Right lobe of liver (tissue), 6 donors: ENCODE measurements at regions of chr2 and their contacts with region 1.

Region 1: DNA sequence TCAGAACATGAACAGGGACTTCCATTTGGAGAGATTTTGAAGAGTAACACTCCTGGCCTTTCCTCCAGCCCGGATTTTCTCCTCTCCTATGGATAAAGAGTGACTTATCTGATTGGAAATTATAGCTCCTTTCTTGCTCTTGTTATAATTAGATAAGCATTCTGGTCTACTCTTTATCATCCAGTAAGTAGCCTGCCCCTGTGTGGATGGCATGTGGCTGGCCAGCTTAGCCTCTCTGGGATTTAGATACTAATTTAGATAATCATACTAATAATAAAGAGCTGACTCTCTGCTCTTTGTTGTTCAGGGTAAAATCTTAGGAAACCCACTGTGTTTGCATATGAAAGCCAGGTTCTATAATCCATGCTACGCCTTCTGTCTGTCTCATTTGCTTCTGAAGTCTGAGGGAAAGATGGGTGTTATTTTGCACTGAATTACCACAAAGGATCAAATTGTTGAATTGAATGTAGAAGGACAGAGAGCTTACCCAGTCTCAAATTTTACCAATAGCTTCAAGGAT is 438.8 kb downstream of the SPAG16 start:
- DNase-seq: no peak
- ATAC-seq: no peak
- H3K4me3 ChIP-seq: no peak overlapping the region
- H3K27ac ChIP-seq: no peak overlapping the region
- H3K4me1 ChIP-seq: no peaks in the 10 kb centered on the region
- H3K27me3 ChIP-seq: no peaks in the 10 kb centered on the region
- CTCF ChIP-seq: no peak
- POLR2A ChIP-seq: no peak

Region 2: GRCh38 chr2:213451542-213452239 is 271.4 kb before region 1 on chr2:
- intact Hi-C with region 1: loop called in 1 of 2 experiments (anchors 5 kb)
- DNase-seq: no peak
- ATAC-seq: no peak
- H3K4me3 ChIP-seq: no peak overlapping the region
- H3K27ac ChIP-seq: no peak overlapping the region
- H3K4me1 ChIP-seq: no peaks in the 10 kb centered on the region
- H3K27me3 ChIP-seq: no peaks in the 10 kb centered on the region
- CTCF ChIP-seq: no peak
- POLR2A ChIP-seq: no peak

Region 3: GRCh38 chr2:213609570-213610170 is 113.4 kb before region 1 on chr2:
- intact Hi-C with region 1: no loop called
- DNase-seq: no peak
- ATAC-seq: no peak
- H3K4me3 ChIP-seq: no peak overlapping the region
- H3K27ac ChIP-seq: no peak overlapping the region
- H3K4me1 ChIP-seq: no peaks in the 10 kb centered on the region
- H3K27me3 ChIP-seq: no peaks in the 10 kb centered on the region
- CTCF ChIP-seq: no peak
- POLR2A ChIP-seq: no peak

Region 4: DNA sequence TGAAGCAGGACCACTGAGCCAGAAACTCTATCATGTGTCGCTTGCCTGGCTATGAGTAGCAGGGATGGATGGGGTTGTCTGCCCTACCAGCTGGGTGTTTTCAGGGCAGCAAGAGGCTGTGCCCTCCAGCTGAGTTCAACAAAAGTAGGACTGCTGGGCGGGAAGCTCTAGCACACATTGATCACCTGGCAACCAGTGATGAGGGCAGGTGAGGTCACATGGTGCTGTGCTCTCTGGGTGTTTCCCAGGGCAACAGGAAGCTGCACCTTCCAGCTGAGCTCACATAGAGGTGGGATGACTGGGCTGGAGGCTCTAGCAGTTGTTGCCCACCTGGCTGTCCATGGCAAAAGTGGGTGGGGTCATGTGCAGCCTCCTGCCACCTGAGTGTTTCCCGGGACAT is 200.4 kb after region 1 on chr2:
- intact Hi-C with region 1: no loop called
- DNase-seq: peak in 1 of 3 donors; percentile 27
- ATAC-seq: no peak
- H3K4me3 ChIP-seq: no peak overlapping the region
- H3K27ac ChIP-seq: no peak overlapping the region
- H3K4me1 ChIP-seq: no peaks in the 10 kb centered on the region
- H3K27me3 ChIP-seq: no peaks in the 10 kb centered on the region
- CTCF ChIP-seq: no peak
- POLR2A ChIP-seq: no peak

Region 5: GRCh38 chr2:214310319-214310718 is 587.2 kb after region 1 on chr2:
- intact Hi-C with region 1: no loop called
- DNase-seq: no peak
- ATAC-seq: peak in 2 of 4 donors; percentile 36 to 42
- H3K4me3 ChIP-seq: no peak overlapping the region
- H3K27ac ChIP-seq: no peak overlapping the region
- H3K4me1 ChIP-seq: no peaks in the 10 kb centered on the region
- H3K27me3 ChIP-seq: no peaks in the 10 kb centered on the region
- CTCF ChIP-seq: peak in 3 of 4 donors; percentile 21 to 40 (median 29)
- POLR2A ChIP-seq: no peak